Posterior cingulate gyrus (tissue), 11 donors: ENCODE measurements at regions of chr11 and their contacts with region 1.

Region 1: GRCh38 chr11:128709402-128709801 is 15.5 kb downstream of the FLI1 start:
- DNase-seq: no peak

Region 2: DNA sequence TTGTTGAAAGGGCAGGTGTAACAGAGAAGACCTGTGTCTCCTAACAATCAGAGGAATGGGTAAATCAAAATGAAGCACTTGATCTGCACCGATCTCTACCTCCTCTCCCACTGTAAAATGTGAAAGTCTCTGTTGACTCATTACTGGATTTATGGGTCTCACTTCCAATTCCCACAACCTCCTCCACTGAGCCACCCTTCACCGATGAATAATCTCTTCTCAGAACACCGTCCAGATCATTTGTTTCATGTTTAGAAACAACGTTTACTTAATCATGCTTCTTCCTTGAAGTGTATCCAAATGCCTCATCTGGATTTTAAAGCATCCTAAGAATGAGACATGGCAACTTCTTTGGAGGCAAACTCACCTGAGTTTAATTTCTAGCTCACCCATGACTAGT is 765.6 kb before region 1 on chr11:
- intact Hi-C with region 1: loop called (anchors 10 kb)
- DNase-seq: no peak

Region 3: DNA sequence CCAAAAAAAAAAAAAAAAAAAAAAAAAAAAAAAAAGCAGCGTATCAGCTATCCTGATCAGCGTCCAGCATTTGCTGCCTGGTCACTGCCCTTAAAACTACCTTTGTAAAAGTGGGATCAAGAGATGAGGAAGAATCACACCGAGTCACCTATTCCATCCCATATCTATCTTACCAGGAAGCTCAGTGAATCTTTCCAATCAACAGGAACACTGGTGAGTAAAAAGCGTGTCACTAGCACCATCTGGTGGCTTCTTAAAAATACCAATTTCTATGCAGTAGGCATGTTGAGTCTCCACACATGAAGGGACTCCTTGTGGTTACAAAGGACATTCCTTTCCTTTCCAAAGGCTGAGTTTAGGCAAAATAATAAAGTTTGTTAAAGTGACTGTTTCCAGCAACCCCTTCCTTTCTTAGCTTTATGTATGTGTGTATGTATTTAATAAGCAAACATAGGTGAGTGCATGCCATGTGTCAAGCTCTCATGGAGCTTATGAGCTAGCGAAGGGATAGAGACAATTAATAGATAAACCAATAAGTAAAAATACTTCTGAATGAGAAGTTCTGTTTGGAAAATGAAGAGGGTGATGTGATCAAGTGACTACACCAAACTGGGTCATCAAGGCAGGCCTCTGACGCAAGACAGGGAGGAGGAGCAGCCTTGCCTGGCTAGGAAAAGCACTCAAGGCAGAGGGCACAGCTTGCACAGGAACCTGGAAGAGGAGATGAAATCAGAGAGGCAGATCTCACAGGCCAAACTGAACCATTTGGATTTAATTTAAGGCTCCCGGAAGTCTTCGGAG is 247.2 kb after region 1 on chr11:
- intact Hi-C with region 1: no loop called
- DNase-seq: no peak